ENCODE measurements at regions of chr13 and their contacts with region 1.

Region 1: GRCh38 chr13:24512197-24512907 is at the start of gene PARP4:
- DNase-seq: peak; percentile 72
- H3K4me3 Mint-ChIP-seq: peak within 1 kb of the TSS; percentile 87
- H3K27ac Mint-ChIP-seq: peak within 1 kb of the TSS; percentile 96
- H3K4me1 Mint-ChIP-seq: peaks cover 28% of the 10 kb centered on the region
- H3K27me3 Mint-ChIP-seq: peaks cover 4% of the 10 kb centered on the region
- total RNA-seq, gene PARP4: 10.1 to 10.9 TPM

Region 2: GRCh38 chr13:24228852-24229458 is 283.4 kb before region 1 on chr13:
- CTCF ChIA-PET with region 1: no interaction called
- intact Hi-C with region 1: loop called (anchors 1 kb)
- DNase-seq: peak; percentile 63
- H3K4me3 Mint-ChIP-seq: no peak overlapping the region
- H3K27ac Mint-ChIP-seq: no peak overlapping the region
- H3K4me1 Mint-ChIP-seq: peaks cover 34% of the 10 kb centered on the region
- H3K27me3 Mint-ChIP-seq: no peaks in the 10 kb centered on the region

Region 3: DNA sequence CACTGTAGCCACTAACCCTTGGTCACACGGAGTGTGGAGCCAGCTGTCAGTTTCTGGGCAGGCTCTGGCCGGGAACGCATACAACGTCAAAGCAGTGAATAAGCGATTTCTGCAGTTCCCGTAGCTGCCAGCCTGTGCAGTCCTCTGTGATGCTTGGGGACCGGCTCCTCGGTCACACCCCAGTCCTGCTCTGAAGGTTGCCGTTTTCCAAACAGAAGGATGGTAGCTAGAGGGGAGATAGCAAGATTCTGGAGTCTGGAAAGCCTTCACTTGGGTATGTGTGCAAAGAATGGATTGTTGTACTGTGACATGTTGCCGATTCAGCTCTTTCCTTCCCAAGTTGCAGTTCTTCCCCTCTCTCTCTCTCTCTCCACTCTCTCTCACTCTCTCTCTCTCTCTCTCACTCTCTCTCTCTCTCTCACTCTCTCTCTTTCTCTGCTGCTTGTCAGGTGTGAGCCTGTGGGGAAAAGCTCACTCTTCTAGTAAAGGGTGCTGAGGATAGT is 241.7 kb before region 1 on chr13:
- CTCF ChIA-PET with region 1: interaction called, 3 read pairs
- intact Hi-C with region 1: loop called (anchors 1 kb)
- DNase-seq: peak; percentile 78
- H3K4me3 Mint-ChIP-seq: peak overlapping the region; percentile 91
- H3K27ac Mint-ChIP-seq: peak overlapping the region; percentile 98
- H3K4me1 Mint-ChIP-seq: peaks cover 75% of the 10 kb centered on the region
- H3K27me3 Mint-ChIP-seq: no peaks in the 10 kb centered on the region

Region 4: DNA sequence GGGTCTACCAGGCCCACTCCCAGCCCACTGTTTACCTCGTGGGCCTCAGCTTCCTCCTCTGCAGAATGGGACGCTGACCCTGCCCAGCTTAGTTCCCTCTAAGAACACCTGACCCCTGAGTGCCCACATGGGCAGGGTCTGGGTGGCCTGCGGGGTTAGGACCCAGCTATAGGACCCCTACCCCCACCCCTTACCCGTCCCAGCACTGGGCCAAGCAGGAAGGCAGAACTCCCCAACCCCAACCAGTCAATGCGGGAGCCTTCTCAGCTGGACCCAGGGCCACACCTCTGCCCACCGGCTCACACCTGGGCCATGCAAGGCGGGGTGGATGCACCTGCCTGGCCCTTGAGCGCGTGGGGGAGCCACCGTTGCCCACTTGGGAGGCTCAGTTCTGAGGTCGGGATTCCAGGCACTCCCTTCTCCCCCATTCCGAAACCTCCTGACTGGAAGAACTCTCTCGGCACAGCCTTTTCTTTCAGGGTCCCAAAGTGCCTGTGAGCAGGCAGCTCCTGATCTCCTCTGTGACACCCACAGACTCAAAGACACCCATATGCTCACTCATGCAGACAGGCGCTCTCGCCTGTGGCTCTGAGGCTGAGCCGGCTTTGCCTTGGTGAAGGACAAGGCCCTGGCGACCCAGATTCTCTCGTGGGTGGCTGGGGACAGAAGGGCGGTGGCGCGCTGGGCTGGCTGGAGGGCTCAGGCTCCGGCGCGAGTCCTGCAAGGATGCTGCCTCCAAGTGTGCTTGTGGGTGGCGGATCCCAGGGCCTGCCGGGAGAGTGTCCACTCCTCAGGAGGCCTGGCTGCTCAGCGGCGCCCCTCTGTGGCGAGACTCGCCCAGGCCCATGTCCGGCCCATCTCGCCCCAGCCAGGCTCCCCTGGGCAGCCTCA is 28.1 kb after region 1 on chr13:
- CTCF ChIA-PET with region 1: no interaction called
- intact Hi-C with region 1: no loop called
- DNase-seq: no peak
- H3K4me3 Mint-ChIP-seq: peak overlapping the region; percentile 32
- H3K27ac Mint-ChIP-seq: no peak overlapping the region
- H3K4me1 Mint-ChIP-seq: peaks cover 6% of the 10 kb centered on the region
- H3K27me3 Mint-ChIP-seq: peaks cover 45% of the 10 kb centered on the region

Region 5: DNA sequence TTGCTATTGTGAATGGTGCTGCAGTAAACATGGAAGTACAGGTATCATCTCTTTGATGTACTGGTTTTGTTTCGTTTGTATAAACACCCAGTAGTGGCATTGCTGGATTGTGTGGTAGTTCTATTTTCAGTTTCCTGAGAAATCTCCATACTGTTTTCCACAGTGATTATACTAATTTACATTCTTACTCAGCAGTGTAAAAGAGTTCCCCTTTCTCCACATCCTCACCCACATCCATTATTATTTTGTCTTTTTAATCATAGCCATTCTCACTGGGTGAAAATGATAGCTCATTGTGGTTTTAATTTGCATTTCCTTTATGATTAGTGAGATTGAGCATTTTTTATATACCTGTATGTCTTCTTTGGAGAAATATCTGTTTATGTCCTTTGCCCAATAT is 62.5 kb after region 1 on chr13:
- CTCF ChIA-PET with region 1: interaction called, 3 read pairs
- intact Hi-C with region 1: loop called (anchors 1 kb)
- DNase-seq: no peak
- H3K4me3 Mint-ChIP-seq: no peak overlapping the region
- H3K27ac Mint-ChIP-seq: no peak overlapping the region
- H3K4me1 Mint-ChIP-seq: peaks cover 10% of the 10 kb centered on the region
- H3K27me3 Mint-ChIP-seq: peaks cover 7% of the 10 kb centered on the region

Region 6: DNA sequence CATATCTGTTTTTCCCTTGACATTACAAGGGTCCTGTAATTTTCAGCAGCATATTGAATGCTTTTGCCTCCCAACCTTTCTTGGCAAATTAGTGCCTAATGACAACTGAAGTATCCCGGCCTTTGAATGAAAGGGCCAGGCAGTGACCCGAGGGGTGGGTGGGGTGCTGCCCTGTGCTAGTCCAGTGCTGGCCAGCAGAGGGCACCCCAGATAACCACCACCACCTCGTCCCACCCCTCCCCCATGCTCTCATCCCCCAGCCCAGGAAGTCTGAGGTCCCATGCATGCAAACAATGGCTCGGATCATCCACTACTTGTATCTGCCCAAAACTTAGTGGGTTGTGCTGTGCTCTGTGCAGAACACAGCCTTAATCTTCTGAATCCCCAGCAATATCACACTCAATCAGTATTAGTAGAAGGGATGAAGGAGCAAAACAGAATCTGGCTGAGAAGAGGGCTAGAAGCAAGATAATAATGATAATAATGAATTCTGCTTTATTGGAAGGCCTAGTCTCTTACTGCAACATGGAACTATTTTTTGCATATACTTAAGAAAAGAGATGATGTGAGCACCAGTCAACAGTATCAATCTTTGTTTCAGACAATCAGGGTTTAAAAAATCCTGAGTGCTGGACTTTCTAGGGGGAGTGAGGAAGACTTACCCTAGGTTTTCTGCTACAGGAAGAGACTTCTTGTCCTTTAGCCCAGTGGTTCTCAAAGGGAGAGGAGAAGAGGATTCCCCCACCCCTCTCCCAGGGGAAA is 171.7 kb after region 1 on chr13:
- CTCF ChIA-PET with region 1: no interaction called
- intact Hi-C with region 1: loop called (anchors 2 kb)
- DNase-seq: peak; percentile 77
- H3K4me3 Mint-ChIP-seq: no peak overlapping the region
- H3K27ac Mint-ChIP-seq: peak overlapping the region; percentile 44
- H3K4me1 Mint-ChIP-seq: peaks cover 31% of the 10 kb centered on the region
- H3K27me3 Mint-ChIP-seq: peaks cover 40% of the 10 kb centered on the region

Region 7: GRCh38 chr13:24922745-24923591 is 410.6 kb after region 1 on chr13:
- CTCF ChIA-PET with region 1: no interaction called
- intact Hi-C with region 1: loop called (anchors 1 kb)
- DNase-seq: peak; percentile 96
- H3K4me3 Mint-ChIP-seq: peak overlapping the region; percentile 94
- H3K27ac Mint-ChIP-seq: peak overlapping the region; percentile 85
- H3K4me1 Mint-ChIP-seq: peaks cover 8% of the 10 kb centered on the region
- H3K27me3 Mint-ChIP-seq: no peaks in the 10 kb centered on the region

Region 8: DNA sequence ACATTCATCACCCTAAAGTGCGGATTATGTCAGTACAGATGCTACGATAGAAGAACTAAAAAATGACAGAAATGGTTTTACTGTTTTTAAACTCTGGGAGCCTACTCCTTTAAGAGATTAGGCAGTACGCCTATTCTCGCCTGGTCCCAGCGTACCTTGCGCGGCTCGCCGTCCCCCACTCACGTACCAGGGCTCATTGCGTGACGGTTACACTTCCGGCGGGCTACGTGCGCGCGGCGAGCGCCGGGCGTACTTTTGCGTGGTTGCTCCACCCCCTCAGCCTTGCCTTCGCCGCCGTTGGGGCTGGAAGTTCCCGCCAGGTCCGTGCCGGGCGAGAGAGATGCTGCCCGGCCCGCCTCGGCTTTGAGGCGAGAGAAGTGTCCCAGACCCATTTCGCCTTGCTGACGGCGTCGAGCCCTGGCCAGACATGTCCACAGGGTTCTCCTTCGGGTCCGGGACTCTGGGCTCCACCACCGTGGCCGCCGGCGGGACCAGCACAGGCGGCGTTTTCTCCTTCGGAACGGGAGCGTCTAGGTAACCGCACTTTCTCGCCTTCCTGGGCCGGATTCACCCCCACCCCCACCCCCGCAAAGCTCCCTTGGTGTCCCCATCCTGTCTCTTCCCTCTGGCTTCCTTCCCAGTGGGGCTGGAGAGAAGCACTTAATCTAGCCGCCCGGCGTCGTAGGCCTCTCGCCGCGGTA is 789.1 kb after region 1 on chr13 and contains the start of gene NUP58:
- CTCF ChIA-PET with region 1: no interaction called
- intact Hi-C with region 1: loop called (anchors 5 kb)
- DNase-seq: peak; percentile 96
- H3K4me3 Mint-ChIP-seq: peak within 1 kb of the TSS; percentile 94
- H3K27ac Mint-ChIP-seq: peak within 1 kb of the TSS; percentile 93
- H3K4me1 Mint-ChIP-seq: peaks cover 40% of the 10 kb centered on the region
- H3K27me3 Mint-ChIP-seq: no peaks in the 10 kb centered on the region
- total RNA-seq, gene NUP58: 91.9 to 93.0 TPM